ENCODE measurements at regions of chr2 and their contacts with region 1.

Region 1: DNA sequence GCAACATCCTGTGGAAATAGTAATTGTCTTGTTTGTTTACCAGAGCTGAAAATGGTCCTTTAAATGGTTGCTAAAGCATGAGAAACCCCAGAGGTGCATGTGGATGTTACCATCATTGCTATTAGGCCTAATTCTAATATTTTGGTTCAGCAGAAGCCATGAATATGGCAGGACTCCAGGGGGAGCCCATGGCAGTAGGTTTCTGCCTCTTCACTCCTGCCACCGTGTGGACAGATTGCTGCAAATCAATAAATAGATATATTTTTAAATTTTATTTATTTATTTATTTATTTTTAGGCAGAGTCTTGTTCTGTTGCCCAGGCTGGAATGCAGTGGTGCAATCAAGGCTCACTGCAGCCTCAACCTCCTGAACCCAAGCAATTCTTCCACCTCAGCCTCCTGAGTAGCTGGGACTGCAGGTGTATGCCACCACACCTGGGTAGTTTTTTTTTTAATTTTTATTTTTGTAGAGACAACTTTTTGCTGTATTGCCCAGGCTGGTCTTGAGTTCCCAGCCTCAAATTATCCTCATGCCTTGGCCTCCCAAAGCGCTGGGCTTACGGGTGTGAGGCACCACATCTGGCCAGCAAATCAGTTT is 54.9 kb upstream of the CAPN13 start:
- DNase-seq: peak; percentile 58
- ATAC-seq: no peak
- H3K4me3 Mint-ChIP-seq: no peak overlapping the region
- H3K27ac Mint-ChIP-seq: no peak overlapping the region
- H3K4me1 Mint-ChIP-seq: peaks cover 16% of the 10 kb centered on the region
- H3K27me3 Mint-ChIP-seq: peaks cover 11% of the 10 kb centered on the region

Region 2: GRCh38 chr2:31333527-31334183 is 471.5 kb after region 1 on chr2:
- CTCF ChIA-PET with region 1: interaction called, 11 read pairs
- POLR2A ChIA-PET with region 1: no interaction called
- DNase-seq: peak; percentile 84
- ATAC-seq: peak; percentile 91
- H3K4me3 Mint-ChIP-seq: no peak overlapping the region
- H3K27ac Mint-ChIP-seq: no peak overlapping the region
- H3K4me1 Mint-ChIP-seq: no peaks in the 10 kb centered on the region
- H3K27me3 Mint-ChIP-seq: no peaks in the 10 kb centered on the region